Pancreas (tissue), 10 donors: ENCODE measurements at regions of chr7 and their contacts with region 1.

Region 1: GRCh38 chr7:53485354-53485753 is 449.9 kb downstream of the POM121L12 start:
- DNase-seq: no peak
- ATAC-seq: no peak
- H3K4me3 ChIP-seq: no peak overlapping the region
- H3K27ac ChIP-seq: no peak overlapping the region
- H3K4me1 ChIP-seq: no peaks in the 10 kb centered on the region
- H3K27me3 ChIP-seq: no peaks in the 10 kb centered on the region
- CTCF ChIP-seq: no peak

Region 2: DNA sequence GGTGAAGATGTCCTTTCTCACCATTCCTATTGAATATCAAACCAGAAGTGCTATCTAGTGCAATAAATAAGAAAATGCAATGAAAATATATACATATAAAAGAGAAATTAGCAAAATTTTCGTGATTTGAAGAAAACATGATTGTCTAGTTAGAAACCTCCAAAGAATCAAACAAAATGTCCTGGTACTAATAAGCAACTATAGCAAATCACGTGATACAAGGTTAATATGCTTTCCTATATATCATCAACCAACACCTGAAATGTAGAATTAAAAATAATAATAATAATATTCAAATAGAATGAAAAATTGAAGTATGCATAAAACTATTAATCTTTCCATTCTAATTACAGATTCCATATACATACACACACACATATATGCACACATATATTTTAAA is 633.8 kb before region 1 on chr7:
- intact Hi-C with region 1: no loop called
- DNase-seq: no peak
- ATAC-seq: no peak
- H3K4me3 ChIP-seq: no peak overlapping the region
- H3K27ac ChIP-seq: no peak overlapping the region
- H3K4me1 ChIP-seq: no peaks in the 10 kb centered on the region
- H3K27me3 ChIP-seq: no peaks in the 10 kb centered on the region
- CTCF ChIP-seq: no peak

Region 3: DNA sequence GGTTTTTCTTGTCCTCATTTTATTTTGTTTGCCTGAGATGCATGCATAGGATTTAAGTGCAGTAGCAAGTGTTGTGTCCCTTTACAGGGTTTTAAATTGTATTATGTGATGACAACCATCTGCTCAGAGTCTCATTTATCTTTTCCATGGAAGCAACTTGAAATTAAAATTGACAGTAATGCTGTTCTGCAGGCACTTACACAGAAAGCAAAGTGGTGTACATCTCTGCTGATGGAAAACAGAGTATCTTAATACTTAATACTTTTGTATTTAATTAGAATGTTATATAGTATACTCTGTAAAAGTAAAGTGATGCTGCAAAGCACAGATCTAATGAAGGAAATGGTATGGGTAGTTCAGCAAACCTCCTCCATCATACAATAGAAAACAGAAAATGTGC is 33.0 kb after region 1 on chr7:
- intact Hi-C with region 1: loop called in 1 of 3 experiments (anchors 1 kb)
- DNase-seq: no peak
- ATAC-seq: no peak
- H3K4me3 ChIP-seq: no peak overlapping the region
- H3K27ac ChIP-seq: no peak overlapping the region
- H3K4me1 ChIP-seq: no peaks in the 10 kb centered on the region
- H3K27me3 ChIP-seq: no peaks in the 10 kb centered on the region
- CTCF ChIP-seq: no peak